Activated CD8-positive, alpha-beta T cell treated with anti-CD3 and anti-CD28 coated beads for 36 hours (primary cell): ENCODE measurements at regions of chr20 and their contacts with region 1.

Region 1: DNA sequence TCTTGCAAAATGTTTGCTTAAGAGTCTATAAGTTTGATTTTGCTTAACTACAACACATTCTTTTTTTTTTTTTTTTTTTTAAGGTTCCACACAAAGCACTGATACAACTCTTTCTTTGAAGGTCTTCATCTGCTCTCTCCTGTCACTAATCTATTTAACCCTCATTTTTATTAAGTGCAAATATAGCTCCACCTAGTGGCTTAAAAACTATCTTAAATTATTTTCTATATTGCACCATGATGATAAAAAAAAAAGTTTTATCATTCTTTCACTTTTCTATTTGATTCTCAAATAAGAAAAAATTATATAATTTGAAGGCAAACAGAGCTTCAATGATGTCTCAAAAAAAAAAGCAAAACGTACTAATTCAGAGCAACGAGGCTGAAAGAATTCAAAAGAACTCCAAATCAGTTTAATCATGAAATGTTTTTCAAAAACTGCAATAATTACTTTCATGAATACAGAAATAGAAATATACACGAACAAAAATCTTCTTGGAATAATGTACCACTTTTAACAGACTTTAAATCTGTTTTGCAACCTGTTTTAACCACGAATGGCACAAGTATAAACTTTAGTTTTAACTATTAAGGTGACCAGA is 12.8 kb downstream of the ESF1 start:
- DNase-seq: no peak
- ATAC-seq: no peak
- H3K4me3 Mint-ChIP-seq: no peak overlapping the region
- H3K27ac Mint-ChIP-seq: no peak overlapping the region
- H3K4me1 Mint-ChIP-seq: peaks cover 9% of the 10 kb centered on the region
- H3K27me3 Mint-ChIP-seq: no peaks in the 10 kb centered on the region
- CTCF ChIP-seq: peak; percentile 68

Region 2: DNA sequence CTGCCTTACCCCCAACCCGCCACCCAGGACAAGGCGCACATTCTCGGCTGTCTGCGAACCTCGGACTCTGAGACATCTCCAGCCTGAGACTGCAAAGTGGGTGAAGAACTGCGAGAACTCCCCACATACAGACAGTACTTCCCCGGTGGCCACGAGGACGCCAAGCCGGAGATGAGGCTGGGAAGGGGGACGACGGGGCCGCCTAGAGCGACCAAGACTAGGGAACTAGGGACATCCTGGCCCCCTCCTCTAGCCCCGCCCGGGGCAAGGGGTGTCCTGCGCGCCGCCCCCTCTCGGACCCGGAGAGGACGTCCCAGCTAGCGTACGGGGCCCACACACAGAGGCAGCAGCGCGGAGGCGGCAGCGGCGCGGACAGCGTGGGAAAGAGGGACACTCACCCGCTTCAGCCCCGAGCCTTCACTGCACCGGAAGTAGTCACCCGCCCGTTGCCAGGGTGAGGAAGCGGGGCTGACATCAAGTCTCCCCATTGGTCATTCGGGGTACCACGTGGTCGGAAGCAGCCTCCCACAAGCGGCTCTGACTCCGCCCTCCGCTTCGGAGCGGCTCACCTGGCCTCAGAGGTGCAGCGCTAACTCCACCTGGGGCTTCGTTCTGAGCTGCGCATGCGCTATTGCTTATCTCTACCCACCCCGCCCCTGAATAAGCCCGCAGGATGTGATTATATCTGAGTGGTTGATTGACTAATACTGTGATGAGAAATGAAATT is 133.3 kb before region 1 on chr20 and contains the start of gene TASP1:
- CTCF ChIA-PET with region 1: interaction called, 3 read pairs
- POLR2A ChIA-PET with region 1: no interaction called
- intact Hi-C with region 1: loop called (anchors 10 kb)
- DNase-seq: peak; percentile 98
- ATAC-seq: peak; percentile 99
- H3K4me3 Mint-ChIP-seq: peak within 1 kb of the TSS; percentile 90
- H3K27ac Mint-ChIP-seq: peak within 1 kb of the TSS; percentile 70
- H3K4me1 Mint-ChIP-seq: peaks cover 22% of the 10 kb centered on the region
- H3K27me3 Mint-ChIP-seq: peaks cover under 1% of the 10 kb centered on the region
- CTCF ChIP-seq: no peak
- total RNA-seq, gene TASP1: 8.7 to 8.8 TPM

Region 3: DNA sequence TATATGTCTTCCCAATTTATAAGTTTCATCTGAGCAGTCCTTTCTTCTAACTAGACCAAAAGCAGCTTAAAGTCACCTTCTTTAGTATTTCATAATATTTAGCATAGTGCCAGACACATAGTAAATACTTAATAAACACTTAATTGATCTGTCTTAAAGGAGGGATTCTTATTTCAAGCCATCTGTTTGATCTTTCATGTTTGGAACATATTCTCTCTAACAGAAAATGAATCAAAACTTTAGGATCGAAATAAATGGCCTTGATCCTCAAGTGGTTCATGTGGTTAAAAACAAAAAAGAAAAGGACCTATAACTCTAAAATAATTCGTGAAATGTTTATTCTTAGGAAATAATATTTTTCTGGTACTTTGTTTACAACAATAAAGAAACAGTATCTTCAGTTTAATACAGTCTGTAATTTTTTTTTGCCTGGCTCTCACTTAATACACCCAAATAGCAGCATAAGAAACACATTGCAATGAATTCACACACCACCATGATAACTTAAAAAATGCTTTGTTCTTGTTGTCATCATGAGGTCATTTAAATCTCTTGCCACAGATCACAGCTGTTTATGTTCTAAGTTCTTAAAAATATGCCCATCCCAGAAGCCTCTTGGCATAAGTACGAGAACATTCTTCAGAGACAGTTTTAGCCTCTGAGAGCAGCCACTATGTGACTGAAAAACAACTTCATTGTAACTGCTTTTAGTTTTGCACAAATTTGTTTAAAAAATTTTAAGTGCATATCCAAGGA is 35.3 kb before region 1 on chr20:
- CTCF ChIA-PET with region 1: no interaction called
- POLR2A ChIA-PET with region 1: no interaction called
- intact Hi-C with region 1: no loop called
- DNase-seq: no peak
- ATAC-seq: no peak
- H3K4me3 Mint-ChIP-seq: no peak overlapping the region
- H3K27ac Mint-ChIP-seq: no peak overlapping the region
- H3K4me1 Mint-ChIP-seq: peaks cover 13% of the 10 kb centered on the region
- H3K27me3 Mint-ChIP-seq: no peaks in the 10 kb centered on the region
- CTCF ChIP-seq: no peak

Region 4: GRCh38 chr20:13753436-13754036 is 18.4 kb before region 1 on chr20:
- CTCF ChIA-PET with region 1: interaction called, 10 read pairs
- POLR2A ChIA-PET with region 1: no interaction called
- intact Hi-C with region 1: no loop called
- DNase-seq: no peak
- ATAC-seq: no peak
- H3K4me3 Mint-ChIP-seq: no peak overlapping the region
- H3K27ac Mint-ChIP-seq: no peak overlapping the region
- H3K4me1 Mint-ChIP-seq: no peaks in the 10 kb centered on the region
- H3K27me3 Mint-ChIP-seq: no peaks in the 10 kb centered on the region
- CTCF ChIP-seq: no peak

Region 5: GRCh38 chr20:13784893-13785715 is 13.2 kb after region 1 on chr20 and contains the starts of genes ESF1 and NDUFAF5:
- CTCF ChIA-PET with region 1: interaction called, 29 read pairs
- POLR2A ChIA-PET with region 1: interaction called, 3 read pairs
- intact Hi-C with region 1: no loop called
- DNase-seq: peak; percentile 97
- ATAC-seq: peak; percentile 99
- H3K4me3 Mint-ChIP-seq: peak within 1 kb of the TSS; percentile 100
- H3K27ac Mint-ChIP-seq: peak within 1 kb of the TSS; percentile 98
- H3K4me1 Mint-ChIP-seq: peaks cover 52% of the 10 kb centered on the region
- H3K27me3 Mint-ChIP-seq: no peaks in the 10 kb centered on the region
- CTCF ChIP-seq: no peak
- total RNA-seq, gene ESF1: 19.9 to 20.4 TPM
- total RNA-seq, gene NDUFAF5: 25.9 to 28.4 TPM

Region 6: DNA sequence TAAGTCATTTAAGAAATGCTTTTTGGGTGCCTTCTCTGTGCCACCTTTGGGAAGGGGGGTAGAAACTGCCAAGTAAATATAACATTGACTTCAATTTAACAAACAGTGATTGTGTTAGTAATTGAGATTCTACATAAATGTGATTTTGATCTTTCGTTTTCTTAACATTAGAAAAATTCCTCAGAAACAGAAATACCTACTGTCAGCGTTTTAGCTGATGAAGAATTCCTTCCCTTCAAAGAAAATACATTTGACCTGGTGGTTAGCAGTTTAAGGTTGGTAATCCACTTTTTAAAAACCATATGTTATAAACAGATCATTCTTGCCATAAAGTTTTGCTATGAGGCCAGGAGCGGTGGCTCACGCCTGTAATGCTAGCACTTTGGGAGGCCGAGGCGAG is 22.7 kb after region 1 on chr20:
- CTCF ChIA-PET with region 1: interaction called, 10 read pairs
- POLR2A ChIA-PET with region 1: no interaction called
- intact Hi-C with region 1: no loop called
- DNase-seq: no peak
- ATAC-seq: no peak
- H3K4me3 Mint-ChIP-seq: no peak overlapping the region
- H3K27ac Mint-ChIP-seq: no peak overlapping the region
- H3K4me1 Mint-ChIP-seq: peaks cover 2% of the 10 kb centered on the region
- H3K27me3 Mint-ChIP-seq: no peaks in the 10 kb centered on the region
- CTCF ChIP-seq: no peak